ENCODE measurements at regions of chr12 and their contacts with region 1.

Region 1: GRCh38 chr12:80412369-80412953 is 31.6 kb upstream of the PTPRQ start:
- DNase-seq: no peak
- ATAC-seq: peak; percentile 48 to 89 (median 73)
- H3K4me3 ChIP-seq: no peak overlapping the region
- H3K27ac ChIP-seq: no peak overlapping the region
- H3K4me1 ChIP-seq: no peaks in the 10 kb centered on the region
- H3K27me3 ChIP-seq: no peaks in the 10 kb centered on the region
- CTCF ChIP-seq: peak; percentile 85

Region 2: GRCh38 chr12:80217011-80217535 is 195.4 kb before region 1 on chr12:
- intact Hi-C with region 1: no loop called
- DNase-seq: no peak
- ATAC-seq: no peak
- H3K4me3 ChIP-seq: no peak overlapping the region
- H3K27ac ChIP-seq: no peak overlapping the region
- H3K4me1 ChIP-seq: no peaks in the 10 kb centered on the region
- H3K27me3 ChIP-seq: no peaks in the 10 kb centered on the region
- CTCF ChIP-seq: no peak

Region 3: DNA sequence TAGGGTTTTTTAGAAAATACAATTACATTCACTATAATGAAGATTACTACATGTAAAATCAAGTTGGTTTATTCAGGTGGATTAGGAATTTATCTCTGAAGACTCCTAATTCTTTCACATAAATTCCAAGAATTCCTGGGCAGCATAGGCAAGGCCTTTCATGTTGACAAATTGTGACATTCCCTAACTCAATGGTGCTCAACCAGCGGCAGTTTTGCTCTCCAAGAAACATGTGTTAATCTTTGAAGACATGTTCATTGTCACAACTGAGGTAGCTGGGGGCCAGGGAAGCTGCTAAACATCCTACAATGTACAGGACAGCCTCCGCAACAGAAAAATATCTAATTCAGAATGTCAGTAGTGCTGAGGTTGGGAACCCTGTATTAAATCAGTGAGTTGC is 77.9 kb after region 1 on chr12:
- intact Hi-C with region 1: no loop called
- DNase-seq: no peak
- ATAC-seq: no peak
- H3K4me3 ChIP-seq: no peak overlapping the region
- H3K27ac ChIP-seq: no peak overlapping the region
- H3K4me1 ChIP-seq: no peaks in the 10 kb centered on the region
- H3K27me3 ChIP-seq: no peaks in the 10 kb centered on the region
- CTCF ChIP-seq: no peak

Region 4: GRCh38 chr12:80763874-80764273 is 351.4 kb after region 1 on chr12:
- intact Hi-C with region 1: loop called (anchors 2 kb)
- DNase-seq: no peak
- ATAC-seq: peak in 1 of 4 donors; percentile 69
- H3K4me3 ChIP-seq: no peak overlapping the region
- H3K27ac ChIP-seq: no peak overlapping the region
- H3K4me1 ChIP-seq: peaks cover 3% of the 10 kb centered on the region
- H3K27me3 ChIP-seq: no peaks in the 10 kb centered on the region
- CTCF ChIP-seq: peak; percentile 72

Region 5: GRCh38 chr12:81128930-81129554 is 716.6 kb after region 1 on chr12:
- intact Hi-C with region 1: loop called in 1 of 2 experiments (anchors 10 kb)
- DNase-seq: no peak
- ATAC-seq: peak; percentile 67 to 87 (median 80)
- H3K4me3 ChIP-seq: no peak overlapping the region
- H3K27ac ChIP-seq: no peak overlapping the region
- H3K4me1 ChIP-seq: peaks cover 9% of the 10 kb centered on the region
- H3K27me3 ChIP-seq: no peaks in the 10 kb centered on the region
- CTCF ChIP-seq: peak; percentile 69